Activated CD4-positive, alpha-beta T cell treated with anti-CD3 and anti-CD28 coated beads for 36 hours (primary cell): ENCODE measurements at regions of chr12 and their contacts with region 1.

Region 1: DNA sequence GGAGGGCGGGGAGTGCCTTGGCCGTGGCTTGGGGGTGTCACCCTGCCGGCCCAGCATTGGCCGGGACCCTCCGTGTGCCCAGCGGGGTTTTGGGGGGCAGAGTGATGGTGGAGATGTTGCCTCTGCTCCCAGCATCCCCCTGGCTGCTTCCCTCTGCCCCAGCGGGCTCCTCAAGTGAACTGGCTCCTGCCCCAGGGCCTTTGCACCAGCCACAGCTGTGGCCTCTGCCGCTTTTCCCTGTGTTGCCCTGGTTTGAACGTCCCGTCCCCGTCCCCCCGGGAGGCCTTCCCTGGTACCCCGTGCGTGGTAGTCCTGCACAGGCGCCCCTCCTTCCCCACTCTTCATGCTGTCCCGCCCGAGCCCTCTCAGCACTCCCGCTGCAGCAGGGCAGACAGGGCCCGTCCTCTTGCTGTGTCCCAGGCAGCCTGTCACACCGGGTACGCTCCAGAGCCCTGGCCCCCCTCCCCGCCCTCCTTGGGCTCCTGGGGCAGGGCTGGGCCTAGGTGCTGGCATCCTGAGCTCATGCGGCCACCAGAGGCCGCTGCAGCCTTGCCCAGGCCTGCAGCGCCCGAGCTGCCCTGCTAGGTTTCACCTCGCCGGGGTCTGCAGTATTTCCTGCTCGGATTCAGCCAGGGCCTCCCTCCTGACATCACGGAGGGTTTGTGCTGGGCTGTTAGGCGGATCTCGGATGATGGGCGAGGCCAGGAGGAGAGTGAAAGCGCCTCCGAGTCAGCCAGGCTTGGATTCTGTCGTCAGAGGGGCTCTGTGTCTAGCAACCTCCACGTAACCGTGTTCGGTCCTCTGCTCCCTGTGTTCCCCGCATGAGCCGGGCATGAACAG is 9.5 kb downstream of the NOC4L start:
- DNase-seq: peak; percentile 82
- ATAC-seq: peak; percentile 95
- H3K4me3 Mint-ChIP-seq: no peak overlapping the region
- H3K27ac Mint-ChIP-seq: no peak overlapping the region
- H3K4me1 Mint-ChIP-seq: no peaks in the 10 kb centered on the region
- H3K27me3 Mint-ChIP-seq: no peaks in the 10 kb centered on the region

Region 2: DNA sequence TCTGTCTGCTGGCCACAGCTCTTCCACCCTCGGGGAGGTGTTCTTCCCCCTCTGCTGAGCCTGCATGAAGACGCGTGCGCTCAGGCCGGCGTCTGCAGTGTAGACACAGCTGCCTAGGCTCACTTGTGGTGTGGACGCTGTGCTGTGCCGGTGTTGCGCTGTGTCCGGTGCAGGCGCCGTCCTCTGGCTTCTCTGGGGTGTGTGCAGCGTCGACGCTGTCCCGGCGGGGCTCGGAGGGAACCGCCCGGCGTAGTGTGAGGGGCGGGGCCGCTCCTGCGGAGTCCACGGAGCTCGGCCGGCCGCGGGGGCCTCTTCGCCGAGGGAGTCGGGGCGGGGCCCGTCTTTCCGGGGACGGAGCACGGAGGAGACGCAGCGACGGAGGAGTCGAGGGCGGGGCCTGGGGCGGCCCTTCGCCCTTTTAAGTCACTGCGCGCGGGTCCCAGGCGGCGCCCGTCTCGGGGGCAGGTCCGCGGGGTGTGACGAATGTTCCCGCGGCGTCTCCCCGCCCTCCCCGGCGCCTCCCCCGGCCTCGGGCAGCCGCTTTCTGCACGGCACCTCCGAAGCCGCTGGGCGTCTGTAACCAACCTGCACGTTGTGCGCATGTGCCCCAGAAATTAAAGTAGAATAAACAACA is 35.8 kb after region 1 on chr12:
- CTCF ChIA-PET with region 1: interaction called, 5 read pairs
- POLR2A ChIA-PET with region 1: interaction called, 4 read pairs
- intact Hi-C with region 1: loop called in 1 of 2 experiments (anchors 1 kb)
- DNase-seq: peak; percentile 97
- ATAC-seq: peak; percentile 95
- H3K4me3 Mint-ChIP-seq: peak overlapping the region; percentile 78
- H3K27ac Mint-ChIP-seq: peak overlapping the region; percentile 79
- H3K4me1 Mint-ChIP-seq: peaks cover 28% of the 10 kb centered on the region
- H3K27me3 Mint-ChIP-seq: no peaks in the 10 kb centered on the region

Region 3: GRCh38 chr12:132218915-132219314 is 65.2 kb after region 1 on chr12:
- CTCF ChIA-PET with region 1: interaction called, 9 read pairs
- POLR2A ChIA-PET with region 1: no interaction called
- intact Hi-C with region 1: loop called (anchors 1 kb)
- DNase-seq: peak; percentile 59
- ATAC-seq: peak; percentile 61
- H3K4me3 Mint-ChIP-seq: no peak overlapping the region
- H3K27ac Mint-ChIP-seq: no peak overlapping the region
- H3K4me1 Mint-ChIP-seq: peaks cover 6% of the 10 kb centered on the region
- H3K27me3 Mint-ChIP-seq: no peaks in the 10 kb centered on the region

Region 4: DNA sequence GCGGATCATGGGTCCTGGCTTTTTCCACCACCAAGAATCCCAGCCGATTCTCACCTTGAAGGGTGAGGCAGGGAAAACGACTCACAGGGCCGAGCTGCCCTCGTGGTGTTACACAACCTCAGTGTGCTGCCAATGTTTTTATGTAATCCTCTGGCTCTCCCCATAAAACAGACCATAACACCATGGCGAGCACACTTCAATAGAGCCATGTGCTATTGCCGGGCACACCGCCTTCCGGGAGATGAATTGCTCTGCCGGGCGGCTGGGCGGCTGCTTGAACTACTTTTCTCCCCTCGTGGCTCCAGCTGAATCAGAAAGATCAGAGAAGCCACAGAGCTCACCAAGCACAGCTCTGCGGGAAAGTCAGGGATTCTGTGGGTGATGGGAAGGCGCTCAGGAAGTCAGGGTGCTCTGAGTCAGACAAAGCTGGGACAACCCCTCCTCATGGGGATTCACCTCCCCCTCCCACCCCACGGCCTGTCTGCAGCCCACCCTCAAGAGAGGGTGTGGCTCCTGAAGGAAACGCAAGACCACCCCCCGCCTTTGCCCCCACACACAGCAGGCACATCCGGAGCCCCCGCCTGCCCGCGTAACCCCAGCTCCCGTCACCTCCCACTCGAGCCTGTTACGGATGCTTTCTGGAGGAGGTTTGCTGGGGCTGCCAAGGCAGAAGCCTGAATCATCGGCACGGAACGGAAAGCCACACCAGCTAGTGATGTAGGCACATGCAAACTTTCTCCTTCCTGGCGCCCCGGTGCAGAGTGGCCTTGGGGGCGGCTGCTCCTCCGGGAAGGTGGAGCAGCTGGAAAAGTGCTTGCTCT is 173.8 kb after region 1 on chr12:
- CTCF ChIA-PET with region 1: interaction called, 4 read pairs
- POLR2A ChIA-PET with region 1: no interaction called
- intact Hi-C with region 1: loop called in 1 of 2 experiments (anchors 5 kb)
- DNase-seq: peak; percentile 89
- ATAC-seq: peak; percentile 86
- H3K4me3 Mint-ChIP-seq: peak overlapping the region; percentile 54
- H3K27ac Mint-ChIP-seq: peak overlapping the region; percentile 79
- H3K4me1 Mint-ChIP-seq: peaks cover 35% of the 10 kb centered on the region
- H3K27me3 Mint-ChIP-seq: peaks cover 39% of the 10 kb centered on the region

Region 5: DNA sequence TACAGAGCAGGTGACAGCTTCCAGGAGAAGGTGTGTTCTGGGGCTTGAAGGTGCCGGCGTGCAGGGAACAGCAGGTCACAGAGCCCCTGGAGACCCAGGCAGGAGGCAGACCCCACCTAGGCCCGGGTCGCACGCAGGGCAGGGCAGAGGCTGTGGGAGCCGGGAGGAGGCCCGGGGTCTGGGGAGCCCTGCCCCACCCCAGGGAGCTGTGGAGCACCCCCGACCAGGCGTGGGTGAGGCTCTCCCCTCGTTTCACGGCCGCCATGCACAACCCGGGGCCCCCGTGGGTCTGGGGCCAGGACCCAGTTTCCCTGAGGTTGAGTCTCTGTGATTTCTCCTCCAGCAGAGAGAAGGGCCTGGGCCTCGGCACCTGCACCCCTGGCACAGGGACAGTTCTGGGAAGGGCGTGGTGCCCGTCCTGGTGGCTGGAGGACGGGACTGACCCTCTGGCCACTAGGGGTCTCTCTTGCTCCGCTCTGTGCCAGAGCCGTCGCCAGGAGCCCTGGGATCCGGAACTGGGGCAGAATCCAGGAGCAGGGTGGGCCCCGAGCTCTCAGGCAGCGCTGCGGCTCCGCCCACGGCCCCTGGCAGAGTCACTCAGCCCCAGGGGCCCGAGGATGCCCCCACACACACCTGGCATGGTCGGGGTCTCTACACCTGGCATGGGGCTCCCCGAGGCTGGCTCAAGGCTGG is 261.1 kb after region 1 on chr12:
- CTCF ChIA-PET with region 1: interaction called, 7 read pairs
- POLR2A ChIA-PET with region 1: no interaction called
- intact Hi-C with region 1: loop called (anchors 1 to 5 kb)
- DNase-seq: peak; percentile 87
- ATAC-seq: peak; percentile 96
- H3K4me3 Mint-ChIP-seq: no peak overlapping the region
- H3K27ac Mint-ChIP-seq: no peak overlapping the region
- H3K4me1 Mint-ChIP-seq: no peaks in the 10 kb centered on the region
- H3K27me3 Mint-ChIP-seq: no peaks in the 10 kb centered on the region

Region 6: GRCh38 chr12:132523576-132524331 is 370.0 kb after region 1 on chr12:
- CTCF ChIA-PET with region 1: interaction called, 4 read pairs
- POLR2A ChIA-PET with region 1: no interaction called
- intact Hi-C with region 1: loop called in 1 of 2 experiments (anchors 1 kb)
- DNase-seq: peak; percentile 86
- ATAC-seq: peak; percentile 86
- H3K4me3 Mint-ChIP-seq: no peak overlapping the region
- H3K27ac Mint-ChIP-seq: no peak overlapping the region
- H3K4me1 Mint-ChIP-seq: peaks cover 4% of the 10 kb centered on the region
- H3K27me3 Mint-ChIP-seq: no peaks in the 10 kb centered on the region

Region 7: GRCh38 chr12:132614861-132615578 is 461.3 kb after region 1 on chr12:
- CTCF ChIA-PET with region 1: no interaction called
- POLR2A ChIA-PET with region 1: no interaction called
- intact Hi-C with region 1: loop called in 1 of 2 experiments (anchors 1 kb)
- DNase-seq: peak; percentile 90
- ATAC-seq: peak; percentile 91
- H3K4me3 Mint-ChIP-seq: no peak overlapping the region
- H3K27ac Mint-ChIP-seq: no peak overlapping the region
- H3K4me1 Mint-ChIP-seq: peaks cover 15% of the 10 kb centered on the region
- H3K27me3 Mint-ChIP-seq: peaks cover 33% of the 10 kb centered on the region